HEK293 (cell line): ENCODE measurements at regions of chr22 and their contacts with region 1.

Region 1: DNA sequence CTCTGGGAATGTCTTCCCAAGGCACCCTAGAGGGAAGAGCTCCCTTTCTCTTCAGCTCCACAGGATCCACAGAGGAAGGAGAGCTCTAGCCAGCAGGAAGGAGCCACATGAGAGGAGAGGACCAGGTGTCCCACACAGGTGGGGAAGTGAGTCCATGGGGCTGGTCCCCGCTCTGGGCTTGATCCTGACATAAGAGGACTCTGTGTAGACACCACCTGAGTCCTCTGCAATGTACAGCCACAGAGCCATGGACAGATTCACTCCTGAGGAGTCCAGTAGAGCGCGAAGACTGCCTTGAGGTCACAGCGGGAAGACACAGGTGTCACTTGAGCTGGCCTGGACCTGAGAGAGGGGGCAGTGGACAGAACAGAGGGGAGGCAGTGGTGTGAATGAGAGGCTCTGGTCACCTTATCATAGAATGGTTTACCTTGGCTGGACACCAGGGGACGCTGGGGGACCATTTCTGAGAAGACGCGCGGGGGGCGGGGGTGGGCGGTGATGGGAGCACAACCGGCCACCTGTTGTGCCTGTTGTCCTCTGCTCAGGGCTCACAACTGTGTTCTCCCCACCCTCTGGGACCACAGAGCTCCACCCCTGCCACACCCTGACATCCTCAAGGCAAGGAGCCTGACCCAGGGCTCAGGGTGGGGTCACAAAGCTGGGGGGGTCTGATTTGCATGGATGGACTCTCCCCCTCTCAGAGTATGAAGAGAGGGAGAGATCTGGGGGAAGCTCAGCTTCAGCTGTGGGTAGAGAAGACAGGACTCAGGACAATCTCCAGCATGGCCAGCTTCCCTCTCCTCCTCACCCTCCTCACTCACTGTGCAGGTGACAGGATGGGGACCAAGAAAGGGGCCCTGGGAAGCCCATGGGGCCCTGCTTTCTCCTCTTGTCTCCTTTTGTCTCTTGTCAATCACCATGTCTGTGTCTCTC is 128.2 kb downstream of the ZNF280B start:
- H3K4me3 ChIP-seq: no peak overlapping the region
- H3K27ac ChIP-seq: no peak overlapping the region
- H3K4me1 ChIP-seq: no peaks in the 10 kb centered on the region
- CTCF ChIP-seq: no peak

Region 2: DNA sequence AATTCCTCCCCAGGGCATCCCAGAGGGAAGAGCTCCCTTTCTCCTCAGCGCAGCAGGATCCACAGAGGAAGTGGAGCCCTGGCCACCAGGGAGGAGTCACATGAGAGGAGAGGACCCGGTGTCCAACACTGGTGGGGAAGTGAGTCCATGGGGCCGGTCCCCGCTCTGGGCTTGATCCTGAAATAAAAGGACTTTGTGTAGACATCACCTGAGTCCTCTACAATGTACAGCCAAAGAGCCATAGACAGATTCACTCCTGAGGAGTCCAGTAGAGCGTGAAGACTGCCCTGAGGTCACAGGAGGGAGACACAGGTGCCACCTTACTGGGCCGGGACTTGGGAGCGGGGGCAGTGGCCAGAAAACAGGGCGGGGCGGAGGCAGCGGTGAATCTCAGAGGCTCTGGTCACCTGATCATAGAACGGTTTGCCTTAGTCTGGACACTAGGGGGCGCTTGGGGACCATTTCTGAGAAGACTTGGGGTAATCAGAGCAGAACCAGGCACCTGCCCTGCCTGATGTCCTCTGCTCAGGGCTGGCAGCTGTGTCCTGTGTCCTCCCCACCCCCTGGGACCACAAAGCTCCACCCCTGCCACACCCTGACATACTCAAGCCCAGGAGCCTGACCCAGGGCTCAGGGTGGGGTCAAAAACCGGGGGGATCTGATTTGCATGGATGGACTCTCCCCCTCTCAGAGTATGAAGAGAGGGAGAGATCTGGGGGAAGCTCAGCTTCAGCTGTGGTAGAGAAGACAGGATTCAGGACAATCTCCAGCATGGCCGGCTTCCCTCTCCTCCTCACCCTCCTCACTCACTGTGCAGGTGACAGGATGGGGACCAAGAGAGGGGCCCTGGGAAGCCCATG is 23.1 kb before region 1 on chr22:
- CTCF ChIA-PET with region 1: interaction called, 13 read pairs
- POLR2A ChIA-PET with region 1: no interaction called
- H3K4me3 ChIP-seq: peak overlapping the region; percentile 22
- H3K27ac ChIP-seq: no peak overlapping the region
- H3K4me1 ChIP-seq: no peaks in the 10 kb centered on the region
- CTCF ChIP-seq: peak; percentile 79